ENCODE measurements at regions of chr18 and their contacts with region 1.

Region 1: DNA sequence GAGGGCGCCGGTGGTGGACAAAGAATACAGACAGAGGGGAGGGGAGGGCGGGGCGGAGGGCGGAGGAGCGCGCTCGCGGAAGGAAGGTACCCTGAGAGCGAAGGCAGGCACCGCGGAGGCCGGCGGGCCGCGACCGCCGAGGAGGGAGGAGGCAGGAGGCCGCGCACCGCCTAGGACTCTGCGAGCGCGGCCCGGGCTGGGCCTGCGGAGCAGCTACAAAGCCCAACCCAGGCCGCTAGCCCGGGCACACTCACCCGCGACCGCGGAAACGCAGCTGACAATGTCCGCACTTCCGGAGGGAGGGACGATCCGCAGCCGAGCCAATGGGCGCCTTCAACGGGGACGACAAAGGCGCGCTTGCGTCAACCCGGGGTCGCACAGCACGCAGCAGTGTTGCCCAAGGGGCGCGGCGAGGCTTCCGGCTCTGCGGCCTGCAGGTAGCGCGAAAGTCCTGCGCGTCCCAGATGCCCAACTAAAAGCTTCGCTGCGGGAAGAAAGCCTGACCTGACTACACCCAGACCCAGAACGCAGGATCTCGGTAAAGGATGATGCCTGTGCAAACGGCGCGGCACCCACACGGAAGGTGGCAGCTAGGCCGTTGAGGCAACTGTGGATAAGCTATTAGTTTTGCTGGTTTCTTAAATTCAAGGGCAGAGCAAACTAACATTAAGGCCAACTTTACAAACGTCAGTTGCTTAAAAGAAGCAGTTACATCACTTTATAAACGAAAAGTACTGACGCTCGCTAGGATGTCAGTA is at the start of gene C18orf32:
- DNase-seq: peak; percentile 95
- H3K4me3 Mint-ChIP-seq: peak within 1 kb of the TSS; percentile 99
- H3K27ac Mint-ChIP-seq: peak within 1 kb of the TSS; percentile 95
- H3K4me1 Mint-ChIP-seq: peaks cover 28% of the 10 kb centered on the region
- H3K27me3 Mint-ChIP-seq: no peaks in the 10 kb centered on the region
- CTCF ChIP-seq: no peak
- total RNA-seq, gene C18orf32: 28.9 and 45.2 TPM in 2 replicates

Region 2: DNA sequence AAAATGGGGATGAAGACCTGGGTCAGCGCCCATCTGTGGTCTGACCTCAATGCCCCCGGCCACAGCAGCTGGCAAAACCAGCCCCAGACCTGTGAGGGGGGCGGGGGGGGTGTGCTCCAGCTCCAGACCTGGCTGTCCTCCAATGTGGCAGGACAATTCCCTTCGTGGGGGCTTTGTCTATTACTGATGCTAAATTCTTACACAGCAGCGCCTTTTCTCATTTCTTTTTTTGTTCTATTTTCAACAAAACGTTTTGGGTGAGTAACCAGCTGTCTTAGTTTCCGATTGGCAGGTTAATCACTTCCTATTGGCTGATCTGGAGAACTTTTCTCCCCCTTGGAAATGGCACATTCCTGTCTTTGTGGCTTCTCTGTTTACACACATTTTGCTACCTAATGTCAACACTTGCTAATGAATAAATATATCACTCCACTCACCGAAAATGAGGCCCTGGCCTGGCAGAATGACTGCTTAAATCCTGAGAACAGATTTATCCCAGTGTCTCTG is 540.8 kb before region 1 on chr18:
- CTCF ChIA-PET with region 1: no interaction called
- POLR2A ChIA-PET with region 1: interaction called, 10 read pairs
- intact Hi-C with region 1: no loop called
- DNase-seq: peak; percentile 39
- H3K4me3 Mint-ChIP-seq: peak overlapping the region; percentile 91
- H3K27ac Mint-ChIP-seq: peak overlapping the region; percentile 36
- H3K4me1 Mint-ChIP-seq: peaks cover 50% of the 10 kb centered on the region
- H3K27me3 Mint-ChIP-seq: no peaks in the 10 kb centered on the region
- CTCF ChIP-seq: no peak

Region 3: GRCh38 chr18:49459404-49460171 is 27.5 kb before region 1 on chr18:
- CTCF ChIA-PET with region 1: interaction called, 4 read pairs
- POLR2A ChIA-PET with region 1: interaction called, 62 read pairs
- intact Hi-C with region 1: loop called (anchors 2 kb)
- DNase-seq: no peak
- H3K4me3 Mint-ChIP-seq: peak overlapping the region; percentile 67
- H3K27ac Mint-ChIP-seq: peak overlapping the region; percentile 96
- H3K4me1 Mint-ChIP-seq: peaks cover 25% of the 10 kb centered on the region
- H3K27me3 Mint-ChIP-seq: no peaks in the 10 kb centered on the region
- CTCF ChIP-seq: no peak

Region 4: GRCh38 chr18:49476664-49477411 is 10.3 kb before region 1 on chr18:
- CTCF ChIA-PET with region 1: interaction called, 5 read pairs
- POLR2A ChIA-PET with region 1: interaction called, 59 read pairs
- intact Hi-C with region 1: no loop called
- DNase-seq: peak; percentile 91
- H3K4me3 Mint-ChIP-seq: peak overlapping the region; percentile 22
- H3K27ac Mint-ChIP-seq: peak overlapping the region; percentile 89
- H3K4me1 Mint-ChIP-seq: peaks cover 12% of the 10 kb centered on the region
- H3K27me3 Mint-ChIP-seq: no peaks in the 10 kb centered on the region
- CTCF ChIP-seq: no peak

Region 5: DNA sequence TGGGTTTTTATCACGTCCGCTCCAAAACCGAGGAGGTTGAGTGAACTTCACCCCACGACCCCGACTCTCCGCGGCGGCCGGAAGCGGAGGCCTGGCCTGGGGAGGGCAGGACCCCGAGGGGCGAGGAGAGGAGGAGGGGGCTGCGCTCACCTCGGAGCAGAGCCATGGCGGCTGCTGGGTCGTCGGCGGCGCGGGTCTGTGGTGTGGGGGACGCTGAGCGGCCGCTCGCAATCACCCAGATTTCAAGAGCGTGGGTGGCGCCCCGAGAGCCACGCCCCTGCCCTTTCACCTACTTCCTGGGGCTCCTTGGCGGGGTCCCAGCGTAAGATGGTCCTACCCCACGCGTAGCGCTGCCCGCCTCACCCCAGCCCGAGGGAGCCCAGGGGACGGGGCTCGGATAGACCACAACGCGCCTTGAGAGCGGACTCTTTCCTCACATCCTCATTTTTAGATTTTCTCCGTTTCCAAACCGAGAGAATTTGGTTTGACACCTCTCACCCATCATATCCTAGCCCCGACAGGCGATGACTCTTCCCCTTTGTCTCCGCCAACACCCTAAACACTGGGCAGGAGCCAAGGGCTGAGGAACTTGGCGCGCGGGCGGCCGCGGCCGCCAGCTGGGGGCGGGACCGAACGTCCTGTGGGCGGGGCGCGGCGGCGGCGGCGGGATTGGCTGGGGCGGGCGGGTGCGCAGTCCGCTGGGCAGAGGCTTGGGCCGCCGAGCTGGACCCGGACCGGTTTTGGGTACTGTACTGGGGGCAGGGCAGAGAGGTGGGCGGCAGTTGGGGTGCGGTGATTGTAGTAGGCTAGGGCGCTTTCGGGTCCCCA is 326.4 kb after region 1 on chr18 and contains the start of gene ACAA2:
- CTCF ChIA-PET with region 1: no interaction called
- POLR2A ChIA-PET with region 1: interaction called, 14 read pairs
- intact Hi-C with region 1: no loop called
- DNase-seq: peak; percentile 95
- H3K4me3 Mint-ChIP-seq: peak within 1 kb of the TSS; percentile 94
- H3K27ac Mint-ChIP-seq: peak within 1 kb of the TSS; percentile 97
- H3K4me1 Mint-ChIP-seq: peaks cover 28% of the 10 kb centered on the region
- H3K27me3 Mint-ChIP-seq: no peaks in the 10 kb centered on the region
- CTCF ChIP-seq: no peak
- total RNA-seq, gene ACAA2: 82.9 and 84.9 TPM in 2 replicates

Region 6: DNA sequence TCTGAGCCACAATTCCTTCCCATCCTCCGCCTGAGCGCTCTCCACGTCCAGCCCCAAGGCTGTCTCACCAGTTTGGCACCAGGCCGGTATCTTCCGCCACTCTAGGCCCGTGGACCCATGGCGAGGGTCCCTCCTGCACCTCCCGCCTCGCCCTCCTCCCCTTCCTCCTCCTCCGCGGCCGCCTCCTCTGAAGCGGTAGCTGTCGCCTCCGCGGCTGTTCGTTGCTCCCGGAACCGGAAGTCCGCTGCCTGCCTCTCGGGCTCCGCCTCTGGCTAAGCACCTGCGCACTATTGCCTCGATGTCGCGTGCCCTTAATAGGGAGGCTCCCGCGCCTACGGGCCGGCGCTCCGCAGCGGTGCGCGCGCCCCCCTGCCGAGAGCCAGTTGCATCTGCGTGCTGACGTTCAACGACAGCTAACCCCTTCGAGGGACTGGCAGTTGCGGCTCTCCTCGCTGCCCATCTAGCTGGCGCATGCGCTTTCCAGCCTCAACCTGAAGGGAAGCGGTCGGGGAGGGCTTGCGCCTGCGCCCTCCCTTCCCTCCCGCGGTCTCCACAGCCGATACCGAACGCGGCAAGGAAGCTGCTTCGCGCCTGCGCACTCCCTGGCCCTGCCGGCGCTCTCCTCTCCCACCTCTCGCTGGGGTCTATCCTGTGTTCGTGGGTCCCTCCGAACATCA is 794.3 kb after region 1 on chr18 and contains the start of gene MBD1:
- CTCF ChIA-PET with region 1: no interaction called
- POLR2A ChIA-PET with region 1: interaction called, 10 read pairs
- intact Hi-C with region 1: no loop called
- DNase-seq: peak; percentile 97
- H3K4me3 Mint-ChIP-seq: peak within 1 kb of the TSS; percentile 96
- H3K27ac Mint-ChIP-seq: peak within 1 kb of the TSS; percentile 97
- H3K4me1 Mint-ChIP-seq: peaks cover 54% of the 10 kb centered on the region
- H3K27me3 Mint-ChIP-seq: no peaks in the 10 kb centered on the region
- CTCF ChIP-seq: no peak
- total RNA-seq, gene MBD1: 203 and 227 TPM in 2 replicates

Measured in MCF 10A (cell line).